ENCODE measurements at regions of chr19 and their contacts with region 1.

Region 1: DNA sequence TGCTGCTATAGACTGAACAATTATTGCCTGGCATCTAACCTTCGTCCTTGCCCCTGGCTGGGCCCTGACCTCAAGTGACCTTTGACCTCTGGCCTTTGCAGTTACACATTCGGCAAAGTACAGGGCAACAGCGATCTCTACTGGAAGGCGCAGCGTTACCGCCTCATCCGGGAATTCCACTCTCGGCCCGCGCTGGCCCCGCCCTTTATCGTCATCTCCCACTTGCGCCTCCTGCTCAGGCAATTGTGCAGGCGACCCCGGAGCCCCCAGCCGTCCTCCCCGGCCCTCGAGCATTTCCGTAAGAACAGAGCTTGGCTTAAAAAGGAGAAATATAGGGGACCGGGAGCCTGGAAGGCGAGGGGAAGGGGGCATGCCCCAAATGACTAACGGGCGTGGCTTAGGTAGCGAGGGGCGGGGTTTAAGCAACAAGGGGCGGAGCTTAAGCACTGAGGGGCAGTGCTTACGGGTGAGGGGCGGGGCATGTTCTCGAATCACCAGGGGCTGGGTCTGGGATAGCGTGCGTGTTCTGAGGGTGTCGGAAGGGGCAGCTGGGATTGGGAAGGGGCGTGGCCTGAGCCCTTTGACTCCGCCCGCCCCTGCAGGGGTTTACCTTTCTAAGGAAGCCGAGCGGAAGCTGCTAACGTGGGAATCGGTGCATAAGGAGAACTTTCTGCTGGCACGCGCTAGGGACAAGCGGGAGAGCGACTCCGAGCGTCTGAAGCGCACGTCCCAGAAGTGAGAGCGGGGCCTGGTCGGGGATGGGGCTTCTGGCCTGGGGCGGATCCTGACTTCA is 52.7 kb downstream of the TRPM4 start:
- DNase-seq: peak; percentile 91 to 97
- H3K4me3 ChIP-seq: peak overlapping the region; percentile 32 to 61 (median 44)
- H3K27ac ChIP-seq: peak overlapping the region; percentile 40; the same call in 1 of the 2 replicates
- H3K4me1 ChIP-seq: peaks cover 0 to 7% (median 3%) of the 10 kb centered on the region in 4 experiments; a peak in 5 of 7 replicates
- H3K27me3 ChIP-seq: no peaks in the 10 kb centered on the region
- CTCF ChIP-seq: peak; percentile 73 to 75 (median 75)
- EP300 ChIP-seq: no peak
- POLR2A ChIP-seq: no peak
- RAD21 ChIP-seq: peak; percentile 78 to 81

Region 2: DNA sequence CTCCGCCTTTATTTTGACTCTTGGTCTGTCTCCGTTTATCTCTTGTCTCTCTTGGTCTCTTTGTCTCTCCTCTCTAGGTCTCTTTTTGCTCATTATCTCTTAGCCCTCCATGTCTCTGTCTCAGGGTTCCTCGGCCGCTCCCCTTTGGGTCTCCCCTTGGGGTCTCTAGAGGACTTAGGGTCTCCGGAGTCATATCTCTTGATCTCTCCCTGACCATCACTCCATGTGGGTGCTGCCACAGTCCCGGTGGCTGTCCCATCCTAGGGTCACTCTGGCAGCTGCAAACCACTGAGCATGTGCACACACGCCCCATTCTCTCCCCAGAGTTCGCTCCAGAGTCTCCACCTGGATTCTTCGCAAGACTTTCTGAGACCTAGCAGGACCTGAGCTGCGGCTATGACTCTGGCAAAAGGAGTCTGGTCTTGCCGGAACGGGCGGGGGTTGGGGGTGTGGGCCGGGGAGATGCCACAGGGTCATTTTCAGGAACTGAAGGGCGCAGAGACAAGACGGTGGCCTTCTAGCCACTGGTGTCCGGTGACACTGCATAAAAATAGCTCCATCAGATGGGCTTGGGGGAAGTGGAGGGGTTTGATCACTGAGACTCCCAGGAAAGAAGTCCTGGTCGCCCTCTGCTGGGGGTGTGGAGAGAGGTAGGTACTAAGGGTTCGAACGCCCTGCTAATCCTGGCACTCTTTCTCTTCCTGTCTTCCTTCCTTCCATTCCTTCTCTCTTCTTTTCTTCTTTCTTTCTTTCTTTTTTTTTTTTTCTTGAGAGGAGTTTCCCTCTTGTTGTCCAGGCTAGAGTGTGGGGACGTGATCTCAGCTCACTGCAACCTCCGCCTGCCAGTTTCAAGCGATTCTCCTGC is 136.6 kb before region 1 on chr19:
- CTCF ChIA-PET with region 1: interaction called, 18 read pairs
- POLR2A ChIA-PET with region 1: interaction called, 3 read pairs
- DNase-seq: peak in 1 of 2 experiments; percentile 60
- H3K4me3 ChIP-seq: no peak overlapping the region
- H3K27ac ChIP-seq: no peak overlapping the region
- H3K4me1 ChIP-seq: peaks cover 0 to 2% (median 0%) of the 10 kb centered on the region in 4 experiments; a peak in 2 of 7 replicates
- H3K27me3 ChIP-seq: peaks cover 26 to 49% (median 47%) of the 10 kb centered on the region in 4 experiments
- CTCF ChIP-seq: peak; percentile 57 to 64 (median 61)
- EP300 ChIP-seq: no peak
- POLR2A ChIP-seq: no peak
- RAD21 ChIP-seq: peak; percentile 40 to 43

Region 3: DNA sequence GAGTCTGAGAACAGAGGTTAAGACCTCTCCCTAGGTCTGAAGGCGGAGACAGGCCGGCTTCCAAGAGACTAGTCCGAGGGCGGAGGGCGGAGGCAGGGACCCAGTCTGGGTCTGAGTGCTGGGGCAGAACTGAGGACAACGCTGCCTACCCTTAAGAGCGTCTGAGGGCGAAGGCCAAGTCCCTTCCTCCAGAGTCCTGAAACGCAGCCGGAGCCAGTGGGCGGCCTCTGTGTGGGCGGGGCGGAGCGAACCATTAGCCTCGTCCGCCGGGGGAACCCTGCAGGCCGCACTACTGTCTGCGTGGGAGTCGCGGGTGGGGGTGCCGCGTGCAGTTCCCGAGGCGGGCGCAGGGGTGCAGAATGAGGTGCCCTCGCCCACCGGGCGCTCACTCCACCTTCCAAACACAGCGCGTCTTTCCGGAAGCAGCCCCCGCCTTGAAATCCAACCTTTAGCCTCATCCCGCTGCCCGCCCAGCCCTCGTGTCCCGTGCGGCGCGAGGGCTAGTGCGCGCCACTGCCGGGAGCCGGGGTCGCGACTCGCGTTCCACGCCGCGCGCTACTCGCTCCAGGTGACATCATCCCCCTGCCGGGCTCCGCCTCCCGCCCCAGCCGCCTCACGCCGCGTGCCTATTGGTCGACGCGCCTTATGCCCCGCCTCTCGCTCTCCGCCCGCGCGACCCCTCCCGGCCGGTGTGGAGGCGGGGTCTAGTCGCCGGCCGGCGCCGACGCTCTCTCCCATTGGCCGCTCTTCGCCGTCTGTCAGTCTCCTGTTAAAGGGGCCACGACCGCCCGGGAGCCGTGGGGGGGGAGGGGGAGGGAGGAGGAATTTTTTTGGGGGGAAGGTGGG is 91.5 kb before region 1 on chr19 and contains the start of gene C19orf73:
- CTCF ChIA-PET with region 1: interaction called, 10 read pairs
- POLR2A ChIA-PET with region 1: interaction called, 3 read pairs
- DNase-seq: peak in 1 of 2 experiments; percentile 94
- H3K4me3 ChIP-seq: peak within 1 kb of the TSS; percentile 64 to 86 (median 78)
- H3K27ac ChIP-seq: peak within 1 kb of the TSS; percentile 57; the same call in 1 of the 2 replicates
- H3K4me1 ChIP-seq: peaks cover 0 to 5% (median 4%) of the 10 kb centered on the region in 4 experiments; a peak in 4 of 7 replicates
- H3K27me3 ChIP-seq: peaks cover 8 to 19% (median 17%) of the 10 kb centered on the region in 4 experiments
- CTCF ChIP-seq: peak in 1 of 3 experiments; percentile 5; a peak in 1 of 4 replicates
- EP300 ChIP-seq: peak in 1 of 2 experiments; percentile 76; a peak in 1 of 3 replicates
- POLR2A ChIP-seq: peak in 1 of 2 experiments; percentile 24; a peak in 1 of 3 replicates
- RAD21 ChIP-seq: no peak; a peak in 1 of 4 replicates
- total RNA-seq, gene C19orf73: 1.2 and 2.5 TPM in 2 replicates

Region 4: GRCh38 chr19:49127674-49128544 is 82.4 kb before region 1 on chr19:
- CTCF ChIA-PET with region 1: interaction called, 25 read pairs
- POLR2A ChIA-PET with region 1: interaction called, 6 read pairs
- DNase-seq: peak in 1 of 2 experiments; percentile 97
- H3K4me3 ChIP-seq: peak overlapping the region; percentile 56 to 74 (median 66)
- H3K27ac ChIP-seq: peak overlapping the region; percentile 48; the same call in 1 of the 2 replicates
- H3K4me1 ChIP-seq: peaks cover 4 to 19% (median 8%) of the 10 kb centered on the region in 4 experiments
- H3K27me3 ChIP-seq: no peaks in the 10 kb centered on the region; a peak in 2 of 7 replicates
- CTCF ChIP-seq: peak in 1 of 3 experiments; percentile 1; a peak in 1 of 4 replicates
- EP300 ChIP-seq: no peak
- POLR2A ChIP-seq: peak in 1 of 2 experiments; percentile 69; a peak in 2 of 3 replicates
- RAD21 ChIP-seq: no peak

Region 5: GRCh38 chr19:49148784-49149651 is 61.3 kb before region 1 on chr19:
- CTCF ChIA-PET with region 1: interaction called, 16 read pairs
- POLR2A ChIA-PET with region 1: interaction called, 27 read pairs
- DNase-seq: peak in 1 of 2 experiments; percentile 100
- H3K4me3 ChIP-seq: peak overlapping the region; percentile 69 to 97 (median 90)
- H3K27ac ChIP-seq: peak overlapping the region; percentile 65; the same call in 1 of the 2 replicates
- H3K4me1 ChIP-seq: peaks cover 0 to 22% (median 9%) of the 10 kb centered on the region in 4 experiments; a peak in 6 of 7 replicates
- H3K27me3 ChIP-seq: peaks cover 0 to 5% (median 2%) of the 10 kb centered on the region in 4 experiments; a peak in 2 of 7 replicates
- CTCF ChIP-seq: no peak
- EP300 ChIP-seq: peak in 1 of 2 experiments; percentile 95; a peak in 1 of 3 replicates
- POLR2A ChIP-seq: no peak; a peak in 2 of 3 replicates
- RAD21 ChIP-seq: no peak